ENCODE measurements at regions of chr11 and their contacts with region 1.

Region 1: GRCh38 chr11:67507864-67508485 is at the start of gene CDK2AP2:
- DNase-seq: peak; percentile 100
- total RNA-seq, gene CDK2AP2: 72.9 TPM

Region 2: DNA sequence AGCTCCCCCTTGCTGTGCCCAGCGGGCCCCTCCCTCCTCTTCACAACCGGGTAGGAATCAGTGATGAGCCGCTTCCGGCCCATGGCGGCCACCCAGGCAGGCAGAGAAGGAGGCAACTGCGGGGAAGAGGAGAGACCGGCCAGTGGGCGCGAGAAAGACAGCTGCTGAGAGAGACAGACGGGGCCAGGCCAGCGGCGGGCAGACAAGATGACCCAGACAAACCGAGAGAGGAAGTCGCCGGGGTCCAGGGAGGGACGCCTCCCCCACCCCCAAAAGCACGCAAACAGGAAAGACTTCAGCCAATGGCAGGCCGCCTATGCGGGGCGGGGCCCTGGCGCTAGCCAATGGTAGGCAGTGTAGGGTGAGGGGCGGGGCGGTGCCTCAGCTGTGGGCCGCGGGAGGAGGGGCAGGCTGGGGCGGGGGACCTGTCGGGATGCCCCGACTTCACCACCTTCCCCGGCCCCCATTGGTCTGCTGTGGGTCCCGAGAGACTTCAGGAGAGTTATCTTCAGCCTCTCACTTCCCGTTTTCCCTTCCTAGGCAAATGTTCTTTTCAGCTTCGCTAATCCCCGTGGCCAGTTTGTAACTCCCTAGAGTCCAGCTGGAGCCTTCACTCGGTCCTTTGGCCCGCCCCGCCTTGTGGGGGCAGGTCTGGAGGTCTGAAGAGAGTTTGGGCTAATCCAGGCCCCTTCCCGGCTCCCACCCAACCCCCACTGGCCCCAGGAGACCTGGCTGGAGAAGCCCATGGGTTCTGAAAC is 154.5 kb before region 1 on chr11 and contains the start of gene POLD4:
- intact Hi-C with region 1: loop called (anchors 5 kb)
- DNase-seq: peak; percentile 100
- total RNA-seq, gene POLD4: 61.6 TPM

Region 3: DNA sequence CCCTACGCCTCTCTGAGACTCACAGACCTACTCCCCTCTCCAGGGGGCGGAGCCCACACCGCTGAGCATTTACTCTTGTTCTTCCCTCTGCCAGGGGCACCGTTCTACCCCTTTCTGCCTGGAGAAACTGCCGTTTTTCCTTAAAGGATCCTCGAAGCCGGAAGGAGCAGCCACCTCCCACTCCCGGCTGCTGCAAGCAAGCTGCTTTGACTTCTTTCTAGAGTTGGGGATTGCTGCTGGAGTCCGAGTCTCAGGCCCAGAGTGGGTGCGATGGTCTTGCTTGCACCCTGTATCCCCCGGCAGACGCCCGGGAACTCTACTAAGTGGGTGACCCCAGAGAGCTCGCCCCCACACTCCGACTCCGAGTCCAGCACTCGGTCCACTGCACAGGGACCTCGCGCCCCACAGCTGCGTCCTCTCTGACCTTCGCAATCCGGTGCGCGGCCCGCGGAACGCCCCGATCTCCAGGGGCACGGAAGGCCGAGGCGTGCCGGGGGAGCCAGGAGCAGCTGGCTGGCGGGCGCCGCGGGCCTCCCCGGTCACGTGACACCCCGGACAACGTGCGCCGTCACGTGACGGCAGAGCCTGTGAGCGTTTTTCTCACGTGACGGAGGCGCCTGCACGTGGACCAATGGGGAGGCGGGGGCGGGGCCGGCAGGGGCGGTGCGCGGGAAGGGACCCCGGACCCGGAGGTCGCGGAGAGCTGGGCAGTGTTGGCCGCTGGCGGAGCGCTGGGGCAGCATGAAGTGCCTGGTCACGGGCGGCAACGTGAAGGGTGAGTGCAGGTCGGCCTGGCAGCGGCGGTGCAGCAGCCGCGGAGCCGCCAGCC is 116.5 kb before region 1 on chr11 and contains the start of gene RAD9A:
- intact Hi-C with region 1: loop called (anchors 2 kb)
- DNase-seq: peak; percentile 98
- total RNA-seq, gene RAD9A: 4.8 TPM

Region 4: DNA sequence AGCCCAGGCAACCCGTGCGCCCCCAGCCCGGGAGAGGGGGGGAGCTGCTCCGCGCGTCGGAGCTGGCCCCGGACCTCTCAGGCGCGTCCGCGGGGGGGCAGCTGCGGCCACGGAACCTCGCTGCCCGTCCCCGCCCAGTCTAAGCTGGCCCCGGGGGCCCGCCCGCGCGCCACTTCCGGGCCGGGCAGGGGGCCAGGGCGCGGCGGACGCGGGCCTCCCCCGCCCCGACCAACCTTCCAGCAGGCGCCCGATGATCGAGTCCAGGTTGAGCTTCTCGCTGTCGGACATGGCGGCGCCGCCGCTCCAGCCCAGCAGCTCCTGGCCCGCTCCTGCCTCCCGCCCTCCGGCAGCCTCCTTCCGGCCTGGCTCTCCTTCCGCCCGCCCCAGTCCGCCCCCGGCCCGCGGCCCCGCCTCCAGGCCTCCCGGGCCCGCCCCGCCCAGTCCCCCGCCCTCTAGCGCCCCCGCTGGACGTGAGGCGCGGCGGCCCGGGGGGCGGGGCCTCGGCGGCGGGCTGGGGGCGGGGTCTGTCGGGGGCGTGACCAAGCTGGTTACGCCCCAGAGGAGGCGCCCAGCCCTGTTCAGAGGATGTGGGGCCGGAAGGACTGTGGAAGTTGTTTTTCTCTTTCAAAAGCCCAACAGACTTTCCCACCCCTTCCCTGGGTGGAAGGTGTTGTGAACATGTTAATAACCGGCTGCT is 106.3 kb before region 1 on chr11 and contains the start of gene PPP1CA:
- intact Hi-C with region 1: no loop called
- DNase-seq: peak; percentile 97
- total RNA-seq, gene PPP1CA: 95.1 TPM

Region 5: GRCh38 chr11:67468835-67469811 is 38.9 kb before region 1 on chr11 and contains the start of gene TMEM134:
- intact Hi-C with region 1: loop called (anchors 2 kb)
- DNase-seq: peak; percentile 98
- total RNA-seq, gene TMEM134: 76.1 TPM

Region 6: DNA sequence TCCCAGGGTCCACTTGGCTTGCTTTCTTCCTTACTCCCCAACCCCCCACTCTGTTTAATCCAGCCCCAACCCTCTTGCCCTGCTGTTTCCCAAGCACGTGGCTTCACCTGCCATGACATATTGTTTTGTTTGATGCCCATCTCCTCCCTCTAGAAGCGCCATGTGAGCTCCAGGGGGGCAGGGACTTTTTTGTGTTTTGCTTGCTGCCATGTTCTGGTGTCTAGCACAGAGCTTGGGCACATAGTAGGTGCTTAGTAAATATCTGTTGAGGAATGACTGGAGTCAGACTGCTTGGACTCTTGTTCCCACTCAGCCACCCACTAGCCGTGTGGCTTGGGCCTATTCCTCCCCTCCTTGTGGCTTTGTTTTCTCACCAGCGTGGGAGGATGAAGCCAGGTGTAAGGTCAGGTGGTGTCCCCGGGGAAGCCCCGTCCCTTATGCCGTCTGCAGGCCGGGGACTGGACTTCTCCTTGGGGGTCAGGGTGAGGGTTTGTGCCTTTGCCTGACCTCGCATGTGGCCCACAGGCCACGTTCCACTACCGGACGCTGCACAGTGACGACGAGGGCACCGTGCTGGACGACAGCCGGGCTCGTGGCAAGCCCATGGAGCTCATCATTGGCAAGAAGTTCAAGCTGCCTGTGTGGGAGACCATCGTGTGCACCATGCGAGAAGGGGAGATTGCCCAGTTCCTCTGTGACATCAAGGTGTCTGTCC is 21.3 kb before region 1 on chr11:
- intact Hi-C with region 1: no loop called
- DNase-seq: no peak

Region 7: GRCh38 chr11:67583247-67584204 is 75.6 kb after region 1 on chr11 and contains the start of gene GSTP1:
- intact Hi-C with region 1: loop called (anchors 2 kb)
- DNase-seq: peak; percentile 95
- total RNA-seq, gene GSTP1: 272 TPM